Heart right ventricle (tissue), 16 donors: ENCODE measurements at regions of chr14 and their contacts with region 1.

Region 1: GRCh38 chr14:50396631-50397390 is at the start of gene CDKL1:
- DNase-seq: peak; percentile 44 to 70
- ATAC-seq: peak; percentile 89 to 95 (median 91)
- H3K4me3 ChIP-seq: peak within 1 kb of the TSS; percentile 16 to 84 (median 74)
- H3K27ac ChIP-seq: peak within 1 kb of the TSS; percentile 11 to 89 (median 78)
- H3K4me1 ChIP-seq: peaks cover 0 to 36% (median 17%) of the 10 kb centered on the region in 9 donors
- H3K27me3 ChIP-seq: no peaks in the 10 kb centered on the region
- CTCF ChIP-seq: no peak
- total RNA-seq, gene CDKL1: 0.71 to 6.0 (median 2.4) TPM

Region 2: GRCh38 chr14:50186107-50186506 is 210.7 kb before region 1 on chr14:
- intact Hi-C with region 1: no loop called
- DNase-seq: no peak
- ATAC-seq: no peak
- H3K4me3 ChIP-seq: no peak overlapping the region
- H3K27ac ChIP-seq: no peak overlapping the region
- H3K4me1 ChIP-seq: no peaks in the 10 kb centered on the region
- H3K27me3 ChIP-seq: no peaks in the 10 kb centered on the region
- CTCF ChIP-seq: no peak

Region 3: GRCh38 chr14:50321009-50321660 is 75.7 kb before region 1 on chr14:
- intact Hi-C with region 1: loop called in 2 of 10 experiments (anchors 5 kb)
- DNase-seq: peak in 1 of 2 donors; percentile 74
- ATAC-seq: peak; percentile 90 to 97 (median 94)
- H3K4me3 ChIP-seq: peak overlapping the region in 6 of 10 donors; percentile 10 to 43 (median 32)
- H3K27ac ChIP-seq: peak overlapping the region in 9 of 10 donors; percentile 6 to 78 (median 61)
- H3K4me1 ChIP-seq: peaks cover 0 to 32% (median 15%) of the 10 kb centered on the region in 9 donors
- H3K27me3 ChIP-seq: no peaks in the 10 kb centered on the region
- CTCF ChIP-seq: peak; percentile 73 to 96 (median 88)

Region 4: DNA sequence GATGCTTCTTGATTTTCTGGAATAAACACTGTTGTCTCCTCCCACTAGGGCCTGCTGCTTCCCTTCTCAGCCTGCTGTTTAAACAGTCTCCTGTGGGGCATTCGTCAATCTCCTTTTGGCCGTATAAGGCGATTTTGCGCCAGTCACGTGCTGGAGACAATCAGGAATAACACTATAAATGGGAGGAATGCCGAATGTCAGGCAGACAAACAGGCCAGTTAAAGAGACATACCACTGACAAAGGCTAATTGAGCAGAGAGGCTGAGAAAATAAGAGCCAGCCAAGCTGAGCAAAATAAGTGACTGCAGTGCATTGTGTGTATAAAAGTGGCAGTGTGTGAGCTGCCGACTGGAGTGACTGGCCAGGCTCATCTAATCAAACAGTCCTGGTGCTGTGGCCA is 61.4 kb before region 1 on chr14:
- intact Hi-C with region 1: loop called in 1 of 10 experiments (anchors 5 kb)
- DNase-seq: peak; percentile 21 to 62
- ATAC-seq: peak; percentile 45 to 83 (median 72)
- H3K4me3 ChIP-seq: peak overlapping the region in 1 of 10 donors; percentile 6
- H3K27ac ChIP-seq: peak overlapping the region; percentile 1 to 88 (median 75)
- H3K4me1 ChIP-seq: peaks cover 0 to 50% (median 45%) of the 10 kb centered on the region in 9 donors
- H3K27me3 ChIP-seq: no peaks in the 10 kb centered on the region
- CTCF ChIP-seq: peak in 1 of 9 donors; percentile 5

Region 5: GRCh38 chr14:50347521-50347920 is 49.3 kb before region 1 on chr14:
- intact Hi-C with region 1: loop called in 1 of 10 experiments (anchors 5 kb)
- DNase-seq: no peak
- ATAC-seq: peak in 1 of 8 donors; percentile 51
- H3K4me3 ChIP-seq: no peak overlapping the region
- H3K27ac ChIP-seq: peak overlapping the region in 2 of 10 donors; percentile 38 to 57
- H3K4me1 ChIP-seq: peaks cover 4 to 45% (median 31%) of the 10 kb centered on the region in 9 donors
- H3K27me3 ChIP-seq: no peaks in the 10 kb centered on the region
- CTCF ChIP-seq: no peak